ENCODE measurements at regions of chr3 and their contacts with region 1.

Region 1: GRCh38 chr3:49802719-49803464 is at the start of gene INKA1:
- DNase-seq: peak; percentile 72
- ATAC-seq: peak; percentile 85
- H3K4me3 ChIP-seq: peak within 1 kb of the TSS; percentile 79
- H3K27ac ChIP-seq: peak within 1 kb of the TSS; percentile 81
- H3K4me1 ChIP-seq: peaks cover 35% of the 10 kb centered on the region
- H3K27me3 ChIP-seq: no peaks in the 10 kb centered on the region
- CTCF ChIP-seq: peak; percentile 90
- POLR2A ChIP-seq: no peak
- RAD21 ChIP-seq: peak; percentile 93
- total RNA-seq, gene INKA1: 2.3 and 2.8 TPM in 2 replicates

Region 2: GRCh38 chr3:49512771-49513358 is 290.0 kb before region 1 on chr3:
- CTCF ChIA-PET with region 1: no interaction called
- POLR2A ChIA-PET with region 1: no interaction called
- dilution Hi-C with region 1: no loop called
- in situ Hi-C with region 1: no loop called
- intact Hi-C with region 1: no loop called
- DNase-seq: no peak
- ATAC-seq: no peak
- H3K4me3 ChIP-seq: no peak overlapping the region
- H3K27ac ChIP-seq: no peak overlapping the region
- H3K4me1 ChIP-seq: no peaks in the 10 kb centered on the region
- H3K27me3 ChIP-seq: no peaks in the 10 kb centered on the region
- CTCF ChIP-seq: no peak
- POLR2A ChIP-seq: no peak
- RAD21 ChIP-seq: no peak

Region 3: GRCh38 chr3:49689046-49689907 is 113.6 kb before region 1 on chr3 and contains the starts of genes MST1 and RNF123:
- CTCF ChIA-PET with region 1: no interaction called
- POLR2A ChIA-PET with region 1: no interaction called
- dilution Hi-C with region 1: no loop called
- in situ Hi-C with region 1: no loop called
- intact Hi-C with region 1: no loop called
- DNase-seq: peak; percentile 89
- ATAC-seq: peak; percentile 83
- H3K4me3 ChIP-seq: peak within 1 kb of the TSS; percentile 79
- H3K27ac ChIP-seq: peak within 1 kb of the TSS; percentile 84
- H3K4me1 ChIP-seq: peaks cover 2% of the 10 kb centered on the region; the same call in 1 of the 2 replicates
- H3K27me3 ChIP-seq: no peaks in the 10 kb centered on the region
- CTCF ChIP-seq: peak; percentile 43
- POLR2A ChIP-seq: no peak
- RAD21 ChIP-seq: no peak
- total RNA-seq, gene MST1: 1.1 and 1.3 TPM in 2 replicates
- total RNA-seq, gene RNF123: 10.8 and 13.4 TPM in 2 replicates

Region 4: GRCh38 chr3:49759226-49759625 is 43.7 kb before region 1 on chr3:
- CTCF ChIA-PET with region 1: no interaction called
- POLR2A ChIA-PET with region 1: no interaction called
- dilution Hi-C with region 1: no loop called
- in situ Hi-C with region 1: no loop called
- intact Hi-C with region 1: no loop called
- DNase-seq: no peak
- ATAC-seq: peak; percentile 35; the same call in 1 of the 2 replicates
- H3K4me3 ChIP-seq: no peak overlapping the region
- H3K27ac ChIP-seq: no peak overlapping the region
- H3K4me1 ChIP-seq: no peaks in the 10 kb centered on the region
- H3K27me3 ChIP-seq: no peaks in the 10 kb centered on the region
- CTCF ChIP-seq: no peak
- POLR2A ChIP-seq: no peak
- RAD21 ChIP-seq: no peak

Region 5: DNA sequence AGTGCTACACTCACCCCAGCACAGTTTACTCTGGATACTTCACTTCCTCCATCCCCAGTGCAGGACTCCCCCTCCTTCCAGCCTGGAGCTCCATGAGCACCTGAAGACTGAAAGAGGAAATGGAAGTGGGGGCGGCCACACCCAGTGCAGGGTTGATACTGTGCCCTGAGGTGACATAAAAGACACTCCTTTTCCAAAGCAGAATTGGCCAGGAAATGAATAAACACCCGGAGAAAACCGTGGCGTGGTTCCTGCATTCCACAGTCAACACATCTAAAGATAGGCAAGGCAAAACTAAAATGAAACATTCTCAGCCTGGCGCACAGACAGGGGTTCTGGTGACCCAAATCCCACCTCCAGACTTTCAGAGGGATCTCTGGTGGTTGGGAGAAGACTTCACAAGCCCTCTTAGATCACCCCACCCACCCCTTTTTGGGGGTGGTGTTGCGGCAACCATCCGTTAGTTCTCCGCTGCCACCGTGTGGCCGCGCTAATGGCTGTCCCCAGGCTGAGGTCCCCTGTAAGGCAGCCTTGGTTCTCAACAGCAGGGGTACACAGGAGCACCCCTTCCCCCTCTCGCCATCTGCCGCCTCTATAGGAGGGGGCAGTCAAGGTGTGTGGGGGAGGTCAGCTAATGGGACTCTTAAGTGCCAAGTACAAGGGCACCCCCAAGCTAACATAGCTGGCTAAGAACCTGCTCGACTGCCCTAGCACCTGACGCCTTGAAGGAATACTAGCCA is 103.3 kb after region 1 on chr3:
- CTCF ChIA-PET with region 1: no interaction called
- POLR2A ChIA-PET with region 1: no interaction called
- dilution Hi-C with region 1: no loop called
- in situ Hi-C with region 1: no loop called
- intact Hi-C with region 1: loop called (anchors 1 kb)
- DNase-seq: peak; percentile 46
- ATAC-seq: peak; percentile 88
- H3K4me3 ChIP-seq: peak overlapping the region; percentile 45; the same call in 1 of the 2 replicates
- H3K27ac ChIP-seq: no peak overlapping the region
- H3K4me1 ChIP-seq: peaks cover 6% of the 10 kb centered on the region
- H3K27me3 ChIP-seq: no peaks in the 10 kb centered on the region
- CTCF ChIP-seq: peak; percentile 66
- POLR2A ChIP-seq: no peak
- RAD21 ChIP-seq: peak; percentile 73

Region 6: GRCh38 chr3:50088725-50089608 is 286.1 kb after region 1 on chr3 and contains the start of gene RBM5:
- CTCF ChIA-PET with region 1: no interaction called
- POLR2A ChIA-PET with region 1: no interaction called
- dilution Hi-C with region 1: no loop called
- in situ Hi-C with region 1: no loop called
- intact Hi-C with region 1: loop called (anchors 5 kb)
- DNase-seq: peak; percentile 91
- ATAC-seq: peak; percentile 96
- H3K4me3 ChIP-seq: peak within 1 kb of the TSS; percentile 94
- H3K27ac ChIP-seq: peak within 1 kb of the TSS; percentile 95
- H3K4me1 ChIP-seq: peaks cover 7% of the 10 kb centered on the region; the same call in 1 of the 2 replicates
- H3K27me3 ChIP-seq: no peaks in the 10 kb centered on the region
- CTCF ChIP-seq: no peak
- POLR2A ChIP-seq: peak; percentile 83
- RAD21 ChIP-seq: no peak
- total RNA-seq, gene RBM5: 121 and 122 TPM in 2 replicates